GM18951 (cell line): ENCODE measurements at regions of chr20 and their contacts with region 1.

Region 1: DNA sequence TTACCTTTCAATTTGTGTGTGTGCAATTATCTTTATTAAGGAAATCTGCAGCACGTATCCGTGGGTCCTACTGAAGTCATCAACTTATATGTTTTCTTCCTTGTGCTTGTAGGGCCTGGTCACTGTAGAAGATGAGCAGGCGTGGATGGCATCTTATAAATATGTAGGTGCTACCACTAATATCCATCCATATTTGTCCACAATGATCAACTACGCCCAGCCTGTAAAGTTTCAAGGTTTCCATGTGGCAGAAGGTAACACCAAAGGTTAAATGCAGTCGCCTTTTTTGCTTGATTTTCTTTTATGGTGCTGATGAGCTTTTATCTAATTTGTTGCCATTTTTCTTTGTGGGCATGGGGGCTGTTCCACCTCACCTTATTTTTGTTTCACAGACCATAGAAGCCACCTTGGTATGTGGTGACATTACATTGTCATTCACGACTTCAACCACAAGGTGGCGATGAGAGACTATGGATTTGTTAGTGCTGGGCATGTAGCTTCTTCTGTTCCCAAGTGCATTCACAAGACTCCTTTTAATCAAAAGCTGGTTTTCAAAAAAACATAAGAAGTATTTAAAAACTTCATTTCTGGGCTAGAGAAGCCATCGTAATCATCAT is 106.5 kb upstream of the LAMP5 start:
- POLR2A ChIP-seq: no peak

Region 2: GRCh38 chr20:9442858-9443257 is 34.9 kb after region 1 on chr20:
- in situ Hi-C with region 1: no loop called
- POLR2A ChIP-seq: no peak

Region 3: DNA sequence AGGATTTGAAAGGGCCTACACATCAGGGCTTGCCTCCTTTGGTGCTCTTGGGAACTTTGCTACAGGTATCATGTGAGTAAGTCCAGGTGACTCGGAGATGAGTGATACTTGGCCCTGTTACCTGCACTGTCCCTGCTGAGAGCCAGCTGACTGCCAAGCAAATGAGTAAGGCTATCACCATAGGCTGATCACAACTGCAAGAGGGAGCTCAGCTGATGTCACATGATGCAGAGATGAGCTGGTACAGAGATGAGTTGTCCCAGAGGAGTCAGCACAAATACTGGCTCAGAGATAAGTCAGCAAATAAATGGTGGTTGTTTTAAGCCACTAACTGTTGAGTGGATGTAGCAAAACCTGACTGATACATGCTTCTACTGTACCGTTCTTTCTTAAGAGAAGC is 147.9 kb after region 1 on chr20:
- in situ Hi-C with region 1: no loop called
- POLR2A ChIP-seq: no peak

Region 4: GRCh38 chr20:9602847-9603183 is 194.9 kb after region 1 on chr20:
- in situ Hi-C with region 1: loop called (anchors 5 kb)
- POLR2A ChIP-seq: no peak

Region 5: GRCh38 chr20:9912858-9913434 is 505.0 kb after region 1 on chr20:
- in situ Hi-C with region 1: loop called (anchors 25 kb)
- POLR2A ChIP-seq: no peak